Activated CD4-positive, alpha-beta T cell treated with anti-CD3 and anti-CD28 coated beads, Interleukin-2, amount 10 ng/mL, durations not matched to agents 24 days and 14 days (primary cell): ENCODE measurements at regions of chrX and their contacts with region 1.

Region 1: GRCh38 chrX:1657367-1658070 is 42.7 kb downstream of the ASMT start:
- DNase-seq: peak; percentile 86
- H3K4me3 Mint-ChIP-seq: peak overlapping the region; percentile 93
- H3K27ac Mint-ChIP-seq: peak overlapping the region; percentile 95
- H3K4me1 Mint-ChIP-seq: peaks cover 28% of the 10 kb centered on the region
- H3K27me3 Mint-ChIP-seq: no peaks in the 10 kb centered on the region

Region 2: DNA sequence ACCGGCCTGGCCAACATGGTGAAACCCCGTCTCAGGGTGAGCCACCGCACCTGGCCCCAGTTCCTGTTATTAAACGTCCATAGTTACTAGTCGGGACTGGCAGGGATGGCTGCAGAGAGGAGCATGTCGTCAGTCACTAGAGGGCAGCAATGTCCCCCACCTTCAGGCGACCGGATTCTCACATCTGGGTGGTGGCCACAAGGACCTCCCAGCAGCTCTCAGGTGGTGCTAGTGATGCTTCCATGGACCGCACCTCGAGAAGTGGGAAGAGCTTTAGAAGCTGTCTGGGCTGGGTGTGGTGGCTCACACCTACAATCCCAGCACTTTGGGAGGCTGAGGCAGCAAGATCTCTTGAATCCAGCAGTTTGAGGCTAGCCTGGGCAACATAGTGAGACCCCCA is 334.2 kb before region 1 on chrX:
- intact Hi-C with region 1: loop called (anchors 2 kb)
- DNase-seq: peak; percentile 86
- H3K4me3 Mint-ChIP-seq: peak overlapping the region; percentile 10
- H3K27ac Mint-ChIP-seq: peak overlapping the region; percentile 66
- H3K4me1 Mint-ChIP-seq: peaks cover 16% of the 10 kb centered on the region
- H3K27me3 Mint-ChIP-seq: peaks cover 2% of the 10 kb centered on the region

Region 3: DNA sequence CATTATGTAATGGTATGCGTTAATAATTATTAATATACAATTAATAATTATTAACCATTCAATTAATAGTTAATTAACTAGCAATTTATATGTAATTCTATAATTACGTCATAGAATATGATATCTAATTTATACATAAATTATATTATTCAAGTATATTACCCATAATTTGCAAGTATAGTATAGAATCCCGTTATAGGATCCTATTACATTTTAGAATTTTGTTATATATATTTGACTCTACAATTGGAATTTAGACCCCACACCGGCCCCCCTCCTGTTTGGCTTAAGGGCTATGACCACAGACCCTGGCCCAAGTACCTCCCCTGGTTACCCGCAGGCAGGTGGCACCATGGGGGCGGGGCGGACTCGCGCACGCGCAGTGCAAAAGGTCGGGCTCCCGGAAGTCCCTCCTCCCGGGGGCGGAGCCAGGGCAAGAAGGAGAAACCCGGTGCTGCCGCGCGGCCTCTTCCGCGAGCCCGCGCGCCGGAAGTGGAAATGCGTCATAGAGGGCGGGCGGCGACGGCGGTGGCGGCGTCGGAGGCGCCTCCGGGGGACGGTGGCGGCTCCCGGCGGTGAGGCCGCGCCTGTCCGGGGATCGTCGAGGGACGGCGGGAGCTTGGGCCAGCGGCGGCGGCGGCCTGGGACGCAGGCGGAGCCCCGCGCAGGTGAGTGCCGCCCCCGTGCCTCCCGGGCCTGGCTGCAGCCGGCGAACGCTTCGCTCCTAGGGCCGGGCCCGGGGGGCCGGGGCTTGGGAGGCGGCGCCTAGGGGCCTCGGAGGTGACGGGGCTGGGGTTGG is 66.2 kb before region 1 on chrX and contains the start of gene AKAP17A:
- intact Hi-C with region 1: loop called (anchors 1 kb)
- DNase-seq: peak; percentile 100
- H3K4me3 Mint-ChIP-seq: peak within 1 kb of the TSS; percentile 97
- H3K27ac Mint-ChIP-seq: peak within 1 kb of the TSS; percentile 93
- H3K4me1 Mint-ChIP-seq: peaks cover 22% of the 10 kb centered on the region
- H3K27me3 Mint-ChIP-seq: no peaks in the 10 kb centered on the region
- total RNA-seq, gene AKAP17A: 59.6 and 62.0 TPM in 2 replicates

Region 4: DNA sequence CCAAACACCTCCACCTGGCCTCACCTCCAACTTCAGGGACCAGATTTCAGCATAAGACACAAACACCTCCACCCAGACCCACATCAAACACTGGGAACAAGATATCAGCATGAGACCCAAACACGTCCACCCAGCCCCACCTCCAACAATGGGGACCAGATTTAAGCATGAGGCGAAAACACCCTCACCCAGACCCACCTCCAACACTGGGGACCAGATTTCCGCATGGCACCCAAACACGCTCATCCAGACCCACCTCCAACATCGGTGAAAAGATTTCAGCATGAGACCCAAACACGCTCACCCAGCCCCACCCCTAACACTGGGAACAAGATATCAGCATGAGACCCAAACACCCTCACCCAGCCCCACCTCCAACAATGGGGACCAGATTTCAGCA is 167.3 kb after region 1 on chrX:
- intact Hi-C with region 1: no loop called
- DNase-seq: no peak
- H3K4me3 Mint-ChIP-seq: no peak overlapping the region
- H3K27ac Mint-ChIP-seq: no peak overlapping the region
- H3K4me1 Mint-ChIP-seq: no peaks in the 10 kb centered on the region
- H3K27me3 Mint-ChIP-seq: no peaks in the 10 kb centered on the region

Region 5: GRCh38 chrX:2500267-2501075 is 843.0 kb after region 1 on chrX and contains the starts of genes DHRSX and ZBED1:
- intact Hi-C with region 1: loop called (anchors 10 kb)
- DNase-seq: peak; percentile 88
- H3K4me3 Mint-ChIP-seq: peak within 1 kb of the TSS; percentile 82
- H3K27ac Mint-ChIP-seq: peak within 1 kb of the TSS; percentile 83
- H3K4me1 Mint-ChIP-seq: peaks cover 30% of the 10 kb centered on the region
- H3K27me3 Mint-ChIP-seq: no peaks in the 10 kb centered on the region
- total RNA-seq, gene DHRSX: 25.7 and 26.6 TPM in 2 replicates
- total RNA-seq, gene ZBED1: 40.1 and 46.2 TPM in 2 replicates

Region 6: DNA sequence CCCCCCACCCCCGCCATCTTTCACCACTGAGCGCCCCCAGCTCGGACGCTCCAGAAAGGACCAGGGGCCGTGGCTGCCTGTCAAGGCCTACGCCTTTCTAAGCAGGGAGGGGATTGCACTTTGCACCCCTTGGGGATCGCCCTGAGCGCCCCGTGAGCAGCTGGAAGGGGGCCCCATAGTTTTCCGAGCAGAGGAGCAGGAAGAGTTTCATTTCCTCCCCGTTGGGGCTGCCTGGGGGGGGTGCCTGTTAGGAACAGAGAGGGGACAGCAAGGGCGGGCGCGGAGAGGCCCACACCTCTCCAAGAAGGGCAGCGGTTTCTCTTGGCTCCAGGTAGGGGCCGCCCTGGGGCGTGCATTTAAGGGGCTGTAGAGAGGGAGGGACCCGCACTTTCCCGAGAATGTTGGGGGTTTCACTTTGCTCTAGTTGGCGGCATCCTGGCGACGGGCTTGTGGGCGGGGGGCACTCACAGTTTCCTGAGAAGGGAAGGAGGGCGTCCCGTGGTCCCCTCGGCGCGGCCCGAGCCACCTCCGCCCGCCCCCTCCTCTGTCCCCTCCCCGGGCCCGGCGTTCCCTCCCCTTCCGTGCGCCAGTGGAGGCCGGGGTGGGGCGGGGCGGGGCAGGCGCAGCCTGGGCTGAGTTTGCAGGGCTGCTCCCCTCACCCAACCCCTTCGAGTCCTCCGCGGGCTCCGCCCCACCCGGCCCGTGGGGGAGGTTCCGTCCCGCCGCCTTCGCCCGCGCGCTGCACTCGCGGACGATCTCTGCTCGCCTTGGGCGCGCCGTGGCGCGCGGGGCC is 951.3 kb after region 1 on chrX:
- intact Hi-C with region 1: loop called (anchors 5 kb)
- DNase-seq: peak; percentile 97
- H3K4me3 Mint-ChIP-seq: peak overlapping the region; percentile 95
- H3K27ac Mint-ChIP-seq: peak overlapping the region; percentile 93
- H3K4me1 Mint-ChIP-seq: peaks cover 46% of the 10 kb centered on the region
- H3K27me3 Mint-ChIP-seq: no peaks in the 10 kb centered on the region